ENCODE measurements at regions of chr16 and their contacts with region 1.

Region 1: GRCh38 chr16:72124761-72125634 is 31.4 kb downstream of the DHX38 start:
- DNase-seq: peak; percentile 77 to 84
- ATAC-seq: peak; percentile 75 to 88 (median 80)
- H3K4me3 ChIP-seq: no peak overlapping the region
- H3K27ac ChIP-seq: no peak overlapping the region
- H3K4me1 ChIP-seq: no peaks in the 10 kb centered on the region
- H3K27me3 ChIP-seq: no peaks in the 10 kb centered on the region
- CTCF ChIP-seq: peak; percentile 72

Region 2: DNA sequence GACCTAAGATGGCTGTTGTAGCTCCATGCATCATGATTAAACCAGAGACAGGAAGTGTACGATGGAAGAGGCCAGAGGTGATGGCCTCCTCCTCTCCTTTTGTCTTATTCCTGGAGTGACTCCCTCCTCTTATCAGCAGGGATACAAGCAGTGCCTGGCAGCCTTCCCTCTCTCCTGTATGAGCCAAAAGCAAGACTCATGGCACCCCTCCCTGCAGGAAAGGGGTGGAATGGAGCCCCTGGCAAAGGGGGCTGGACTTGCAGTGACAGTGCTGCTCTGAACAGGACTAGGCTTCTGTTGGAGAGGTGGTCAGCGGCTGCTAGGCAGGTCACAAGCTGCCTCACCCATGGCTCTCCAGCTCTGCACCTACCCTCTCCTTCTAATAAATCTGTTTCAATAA is 40.0 kb before region 1 on chr16:
- intact Hi-C with region 1: no loop called
- DNase-seq: no peak
- ATAC-seq: no peak
- H3K4me3 ChIP-seq: no peak overlapping the region
- H3K27ac ChIP-seq: no peak overlapping the region
- H3K4me1 ChIP-seq: no peaks in the 10 kb centered on the region
- H3K27me3 ChIP-seq: no peaks in the 10 kb centered on the region
- CTCF ChIP-seq: no peak

Region 3: GRCh38 chr16:72474501-72475123 is 349.6 kb after region 1 on chr16:
- intact Hi-C with region 1: loop called in 1 of 2 experiments (anchors 10 kb)
- DNase-seq: no peak
- ATAC-seq: no peak
- H3K4me3 ChIP-seq: no peak overlapping the region
- H3K27ac ChIP-seq: no peak overlapping the region
- H3K4me1 ChIP-seq: no peaks in the 10 kb centered on the region
- H3K27me3 ChIP-seq: no peaks in the 10 kb centered on the region
- CTCF ChIP-seq: no peak

Region 4: GRCh38 chr16:74034862-74035261 is 1909.9 kb after region 1 on chr16:
- intact Hi-C with region 1: loop called in 1 of 2 experiments (anchors 10 kb)
- DNase-seq: no peak
- ATAC-seq: no peak
- H3K4me3 ChIP-seq: no peak overlapping the region
- H3K27ac ChIP-seq: no peak overlapping the region
- H3K4me1 ChIP-seq: no peaks in the 10 kb centered on the region
- H3K27me3 ChIP-seq: peaks cover 0 to 3% (median 0%) of the 10 kb centered on the region in 3 donors
- CTCF ChIP-seq: peak; percentile 17